Mammary epithelial cell (primary cell): ENCODE measurements at regions of chr2 and their contacts with region 1.

Region 1: GRCh38 chr2:46351750-46352138 is 54.5 kb downstream of the EPAS1 start:
- DNase-seq: no peak
- H3K4me3 ChIP-seq: no peak overlapping the region
- H3K27ac ChIP-seq: no peak overlapping the region
- H3K4me1 ChIP-seq: no peaks in the 10 kb centered on the region
- H3K27me3 ChIP-seq: no peaks in the 10 kb centered on the region
- CTCF ChIP-seq: no peak

Region 2: DNA sequence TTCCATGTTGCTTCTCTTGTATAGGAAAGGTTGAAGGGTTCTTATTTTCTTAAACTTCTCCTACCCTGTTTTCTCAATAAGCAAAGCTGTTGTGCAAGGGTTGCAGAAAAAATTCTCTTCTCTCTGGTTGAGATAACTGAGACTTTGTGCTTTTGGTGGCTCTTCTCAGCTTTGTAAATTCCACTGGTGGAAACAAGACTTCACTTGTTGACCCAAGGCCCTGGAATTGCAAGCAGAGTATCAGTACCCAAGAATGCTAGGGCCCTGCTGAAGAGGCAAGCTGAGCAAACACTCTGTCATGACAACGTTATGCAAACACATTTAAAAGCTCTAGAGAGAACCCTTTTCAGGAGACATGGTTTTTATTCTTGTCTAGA is 349.2 kb before region 1 on chr2:
- CTCF ChIA-PET with region 1: no interaction called
- dilution Hi-C with region 1: no loop called
- in situ Hi-C with region 1: loop called in 1 of 2 experiments (anchors 10 kb)
- intact Hi-C with region 1: no loop called
- DNase-seq: peak; percentile 11
- H3K4me3 ChIP-seq: no peak overlapping the region
- H3K27ac ChIP-seq: no peak overlapping the region
- H3K4me1 ChIP-seq: peaks cover 3% of the 10 kb centered on the region
- H3K27me3 ChIP-seq: no peaks in the 10 kb centered on the region
- CTCF ChIP-seq: no peak

Region 3: DNA sequence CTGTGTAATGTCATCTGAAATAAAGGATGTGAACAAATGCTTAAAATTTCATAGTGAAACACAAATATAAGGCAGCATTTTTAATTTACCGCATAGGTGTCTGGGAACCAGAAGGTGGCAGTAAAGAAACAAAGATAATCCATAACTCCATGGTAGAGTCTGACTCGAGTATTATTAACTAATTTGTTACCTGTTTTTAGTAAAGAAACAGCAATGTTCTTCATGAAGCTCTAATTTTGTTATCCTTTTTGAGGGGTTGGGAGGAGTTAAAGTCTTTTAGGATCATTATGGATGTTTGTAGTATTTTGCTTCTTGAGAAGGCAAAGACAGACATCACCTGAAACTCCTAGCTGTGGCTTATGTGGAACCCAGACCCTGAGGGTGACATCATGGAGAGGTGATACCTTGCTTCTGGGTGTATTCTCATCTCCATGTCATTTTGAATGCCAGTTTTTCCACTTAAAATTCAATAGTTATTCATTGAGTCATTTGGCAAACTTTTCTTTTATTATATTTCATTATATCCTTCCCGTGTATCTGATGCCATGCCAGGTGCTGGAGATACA is 340.7 kb before region 1 on chr2:
- CTCF ChIA-PET with region 1: no interaction called
- dilution Hi-C with region 1: no loop called
- in situ Hi-C with region 1: loop called (anchors 10 kb)
- intact Hi-C with region 1: no loop called
- DNase-seq: peak; percentile 37
- H3K4me3 ChIP-seq: no peak overlapping the region
- H3K27ac ChIP-seq: no peak overlapping the region
- H3K4me1 ChIP-seq: peaks cover 36% of the 10 kb centered on the region
- H3K27me3 ChIP-seq: no peaks in the 10 kb centered on the region
- CTCF ChIP-seq: peak; percentile 62 to 69

Region 4: DNA sequence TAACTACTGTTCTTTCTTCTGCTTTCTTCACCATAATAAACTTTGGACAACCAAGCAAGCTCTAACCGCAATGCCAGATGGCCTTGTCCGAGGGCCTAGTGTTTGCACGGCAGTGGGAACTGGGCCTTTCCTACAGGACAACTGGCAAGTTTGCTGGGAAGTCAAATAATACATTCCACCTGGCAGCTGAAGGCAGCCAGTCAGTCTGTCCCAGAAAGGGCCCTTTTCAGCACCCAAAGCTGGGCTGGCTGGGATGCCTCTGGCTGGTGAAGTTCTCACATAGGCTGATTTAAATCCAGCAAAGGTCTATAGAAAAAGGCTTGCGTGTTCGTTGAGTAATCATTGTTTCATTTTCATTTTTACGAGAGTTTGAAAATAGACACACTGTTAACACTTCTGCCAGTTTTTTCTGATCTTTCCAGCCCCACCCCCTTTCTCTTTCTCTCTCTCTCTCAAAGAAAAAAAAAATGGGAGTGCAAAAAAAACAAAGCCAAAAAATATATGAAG is 164.6 kb before region 1 on chr2:
- CTCF ChIA-PET with region 1: no interaction called
- dilution Hi-C with region 1: loop called (anchors 5 kb)
- in situ Hi-C with region 1: no loop called
- intact Hi-C with region 1: no loop called
- DNase-seq: peak; percentile 49
- H3K4me3 ChIP-seq: no peak overlapping the region
- H3K27ac ChIP-seq: no peak overlapping the region
- H3K4me1 ChIP-seq: peaks cover 1% of the 10 kb centered on the region
- H3K27me3 ChIP-seq: no peaks in the 10 kb centered on the region
- CTCF ChIP-seq: no peak

Region 5: GRCh38 chr2:46241344-46241743 is 110.4 kb before region 1 on chr2:
- CTCF ChIA-PET with region 1: no interaction called
- dilution Hi-C with region 1: no loop called
- in situ Hi-C with region 1: no loop called
- intact Hi-C with region 1: no loop called
- DNase-seq: peak; percentile 44
- H3K4me3 ChIP-seq: no peak overlapping the region
- H3K27ac ChIP-seq: no peak overlapping the region
- H3K4me1 ChIP-seq: peaks cover 3% of the 10 kb centered on the region
- H3K27me3 ChIP-seq: no peaks in the 10 kb centered on the region
- CTCF ChIP-seq: no peak

Region 6: GRCh38 chr2:46615986-46616485 is 264.3 kb after region 1 on chr2:
- CTCF ChIA-PET with region 1: no interaction called
- dilution Hi-C with region 1: no loop called
- in situ Hi-C with region 1: no loop called
- intact Hi-C with region 1: no loop called
- DNase-seq: no peak
- H3K4me3 ChIP-seq: peak overlapping the region; percentile 66 to 91 (median 84)
- H3K27ac ChIP-seq: peak overlapping the region; percentile 79
- H3K4me1 ChIP-seq: peaks cover 16% of the 10 kb centered on the region
- H3K27me3 ChIP-seq: no peaks in the 10 kb centered on the region
- CTCF ChIP-seq: peak in 1 of 2 donors; percentile 6